Transverse colon (tissue), 4 donors: ENCODE measurements at regions of chr11 and their contacts with region 1.

Region 1: DNA sequence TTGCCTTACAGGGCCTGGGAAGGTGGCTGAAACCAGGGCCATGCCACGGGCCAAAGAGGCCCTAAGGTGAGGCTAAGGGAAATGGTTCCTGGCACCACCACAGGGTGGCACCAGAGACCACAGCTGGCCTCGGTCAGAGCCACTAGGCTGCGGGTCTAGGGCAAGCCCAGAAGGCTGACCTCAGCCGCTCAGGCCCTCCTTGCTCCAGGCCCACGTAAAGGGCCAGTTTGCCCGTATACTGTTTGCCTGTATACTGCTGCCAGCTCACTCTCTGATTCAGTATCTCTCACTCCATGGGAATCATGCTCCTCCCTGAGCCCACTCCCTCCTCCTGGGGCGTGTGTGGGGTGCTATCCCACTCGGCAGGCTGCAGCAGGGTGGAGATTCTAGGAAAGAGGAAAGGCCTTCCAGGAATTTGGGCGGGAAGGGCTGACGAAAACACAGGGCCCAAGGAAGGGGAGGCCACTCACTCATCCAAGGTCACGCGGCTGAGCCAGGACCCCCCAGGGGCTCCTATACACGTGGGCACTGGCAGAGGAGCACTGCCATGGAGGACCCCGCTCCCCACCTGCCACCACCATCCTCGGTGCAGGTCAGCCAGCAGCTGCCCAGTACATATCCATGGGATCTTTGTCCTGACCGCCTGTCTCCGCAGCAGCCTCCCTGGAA is 62.4 kb downstream of the NECTIN1 start:
- DNase-seq: peak; percentile 79
- H3K4me3 ChIP-seq: no peak overlapping the region
- H3K27ac ChIP-seq: no peak overlapping the region
- H3K4me1 ChIP-seq: peaks cover 0 to 8% (median 7%) of the 10 kb centered on the region in 4 donors
- H3K27me3 ChIP-seq: no peaks in the 10 kb centered on the region
- CTCF ChIP-seq: peak; percentile 93 to 95 (median 93)
- EP300 ChIP-seq: no peak
- POLR2A ChIP-seq: no peak

Region 2: GRCh38 chr11:119728651-119729580 is 62.3 kb after region 1 on chr11 and contains the start of gene NECTIN1:
- in situ Hi-C with region 1: loop called in 2 of 4 experiments (anchors 10 kb)
- intact Hi-C with region 1: loop called (anchors 2 kb)
- DNase-seq: peak; percentile 91
- H3K4me3 ChIP-seq: peak within 1 kb of the TSS; percentile 65 to 91 (median 80)
- H3K27ac ChIP-seq: peak within 1 kb of the TSS; percentile 91 to 97 (median 93)
- H3K4me1 ChIP-seq: peaks cover 11 to 40% (median 31%) of the 10 kb centered on the region in 4 donors
- H3K27me3 ChIP-seq: no peaks in the 10 kb centered on the region
- CTCF ChIP-seq: peak; percentile 91 to 99 (median 98)
- EP300 ChIP-seq: no peak
- POLR2A ChIP-seq: peak; percentile 69
- total RNA-seq, gene NECTIN1: 11.0 to 71.2 (median 12.6) TPM

Region 3: GRCh38 chr11:120079750-120080490 is 413.3 kb after region 1 on chr11:
- in situ Hi-C with region 1: loop called in 1 of 4 experiments (anchors 25 kb)
- intact Hi-C with region 1: no loop called
- DNase-seq: no peak
- H3K4me3 ChIP-seq: no peak overlapping the region
- H3K27ac ChIP-seq: no peak overlapping the region
- H3K4me1 ChIP-seq: no peaks in the 10 kb centered on the region
- H3K27me3 ChIP-seq: peaks cover 8% of the 10 kb centered on the region
- CTCF ChIP-seq: peak; percentile 48 to 60 (median 55)
- EP300 ChIP-seq: no peak
- POLR2A ChIP-seq: no peak

Region 4: DNA sequence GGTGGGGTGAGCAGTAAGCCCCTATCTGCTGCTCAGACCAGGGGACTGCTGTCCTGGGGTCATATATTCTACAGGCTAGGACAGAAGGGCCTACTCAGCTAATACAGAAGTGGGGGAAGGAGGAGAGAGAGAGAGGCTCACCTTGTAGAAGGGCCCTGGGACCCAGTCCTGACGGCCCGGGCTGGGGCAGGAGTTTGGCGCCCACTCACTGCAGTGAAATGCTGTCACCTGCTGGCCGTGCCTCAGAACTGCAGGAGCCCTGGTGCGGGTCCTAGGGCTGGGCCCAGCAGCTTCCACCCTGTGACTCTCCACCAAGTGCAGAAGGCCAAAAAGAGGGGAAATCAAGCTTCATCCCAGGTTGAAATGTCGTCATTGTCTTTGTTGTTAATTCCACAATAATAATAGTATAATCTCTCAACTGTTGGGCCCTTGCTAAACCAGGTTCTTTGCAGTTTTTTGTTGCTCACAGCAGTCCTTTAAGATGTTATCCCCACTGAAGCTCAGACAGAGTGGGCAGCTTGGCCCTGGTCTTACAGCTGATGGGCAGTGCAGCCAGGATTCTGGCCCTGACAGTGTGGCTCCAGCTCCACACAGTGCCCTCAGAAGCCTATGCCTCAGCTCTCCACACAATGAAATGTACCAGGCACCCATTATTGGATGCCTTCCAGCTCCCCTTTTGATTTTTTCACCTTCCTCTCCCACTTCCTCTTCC is 441.7 kb after region 1 on chr11:
- in situ Hi-C with region 1: loop called in 2 of 4 experiments (anchors 25 kb)
- intact Hi-C with region 1: loop called (anchors 1 kb)
- DNase-seq: peak; percentile 75
- H3K4me3 ChIP-seq: no peak overlapping the region
- H3K27ac ChIP-seq: no peak overlapping the region
- H3K4me1 ChIP-seq: no peaks in the 10 kb centered on the region
- H3K27me3 ChIP-seq: no peaks in the 10 kb centered on the region
- CTCF ChIP-seq: peak; percentile 97 to 100 (median 100)
- EP300 ChIP-seq: no peak
- POLR2A ChIP-seq: no peak